Endothelial cell of umbilical vein (primary cell): ENCODE measurements at regions of chr6 and their contacts with region 1.

Region 1: GRCh38 chr6:112180095-112180820 is 74.1 kb downstream of the LAMA4 start:
- DNase-seq: peak; percentile 71
- H3K4me3 ChIP-seq: no peak overlapping the region
- H3K27ac ChIP-seq: no peak overlapping the region
- H3K4me1 ChIP-seq: peaks cover 11% of the 10 kb centered on the region
- H3K27me3 ChIP-seq: no peaks in the 10 kb centered on the region
- CTCF ChIP-seq: peak; percentile 28 to 46
- POLR2A ChIP-seq: no peak

Region 2: DNA sequence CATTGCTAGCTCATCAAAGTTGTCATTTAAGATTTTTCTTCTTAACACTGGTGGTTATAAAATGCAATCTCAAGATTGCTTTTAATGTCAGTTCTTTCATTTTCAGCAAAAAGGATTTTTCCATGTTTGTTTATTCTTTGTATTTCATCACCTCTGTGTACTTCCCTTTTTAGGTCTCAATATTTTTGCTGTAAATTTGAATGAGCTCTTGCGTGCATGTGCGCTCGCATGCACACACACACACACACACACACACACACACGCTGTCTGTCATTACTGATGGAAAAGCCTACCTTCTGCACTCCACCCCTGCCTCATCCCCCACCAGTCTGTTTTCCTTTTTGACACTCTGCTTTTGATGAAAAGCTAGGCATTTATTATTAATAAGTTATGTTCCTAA is 221.7 kb before region 1 on chr6:
- CTCF ChIA-PET with region 1: no interaction called
- POLR2A ChIA-PET with region 1: no interaction called
- dilution Hi-C with region 1: no loop called
- intact Hi-C with region 1: no loop called
- DNase-seq: no peak
- H3K4me3 ChIP-seq: no peak overlapping the region
- H3K27ac ChIP-seq: no peak overlapping the region
- H3K4me1 ChIP-seq: no peaks in the 10 kb centered on the region
- H3K27me3 ChIP-seq: peaks cover 12 to 14% of the 10 kb centered on the region in 2 experiments
- CTCF ChIP-seq: no peak
- POLR2A ChIP-seq: no peak

Region 3: DNA sequence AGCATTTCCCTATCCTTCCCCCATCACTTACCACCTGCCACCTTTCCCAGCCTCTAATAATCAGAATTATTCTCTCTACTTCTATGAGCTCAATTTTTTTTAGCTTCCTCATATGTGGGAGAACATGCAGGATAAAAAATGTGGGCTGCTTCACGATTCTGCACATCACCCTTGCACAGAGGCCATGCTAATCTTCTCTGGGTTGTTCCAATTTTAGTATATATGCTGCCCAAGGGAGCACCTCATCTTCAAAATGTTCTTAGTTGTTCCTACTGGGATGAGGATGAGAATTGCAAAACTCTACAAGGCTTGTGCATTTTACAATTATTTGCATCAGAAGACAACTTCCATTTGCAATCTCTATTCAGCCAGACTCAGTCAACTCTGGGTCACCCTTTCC is 16.0 kb after region 1 on chr6:
- CTCF ChIA-PET with region 1: interaction called, 15 read pairs
- POLR2A ChIA-PET with region 1: no interaction called
- dilution Hi-C with region 1: no loop called
- intact Hi-C with region 1: no loop called
- DNase-seq: no peak
- H3K4me3 ChIP-seq: no peak overlapping the region
- H3K27ac ChIP-seq: no peak overlapping the region
- H3K4me1 ChIP-seq: peaks cover 11% of the 10 kb centered on the region
- H3K27me3 ChIP-seq: no peaks in the 10 kb centered on the region
- CTCF ChIP-seq: no peak
- POLR2A ChIP-seq: no peak

Region 4: GRCh38 chr6:112216699-112217551 is 36.7 kb after region 1 on chr6:
- CTCF ChIA-PET with region 1: interaction called, 8 read pairs
- POLR2A ChIA-PET with region 1: no interaction called
- dilution Hi-C with region 1: no loop called
- intact Hi-C with region 1: loop called (anchors 2 kb)
- DNase-seq: peak; percentile 96
- H3K4me3 ChIP-seq: no peak overlapping the region
- H3K27ac ChIP-seq: peak overlapping the region; percentile 96
- H3K4me1 ChIP-seq: peaks cover 81% of the 10 kb centered on the region
- H3K27me3 ChIP-seq: no peaks in the 10 kb centered on the region
- CTCF ChIP-seq: no peak
- POLR2A ChIP-seq: peak; percentile 93

Region 5: GRCh38 chr6:112245511-112246203 is 65.4 kb after region 1 on chr6:
- CTCF ChIA-PET with region 1: interaction called, 49 read pairs
- POLR2A ChIA-PET with region 1: no interaction called
- dilution Hi-C with region 1: no loop called
- intact Hi-C with region 1: no loop called
- DNase-seq: peak; percentile 14
- H3K4me3 ChIP-seq: no peak overlapping the region
- H3K27ac ChIP-seq: peak overlapping the region; percentile 29
- H3K4me1 ChIP-seq: peaks cover 88% of the 10 kb centered on the region
- H3K27me3 ChIP-seq: no peaks in the 10 kb centered on the region
- CTCF ChIP-seq: no peak
- POLR2A ChIP-seq: no peak

Region 6: GRCh38 chr6:112269114-112269513 is 88.9 kb after region 1 on chr6:
- CTCF ChIA-PET with region 1: interaction called, 83 read pairs
- POLR2A ChIA-PET with region 1: no interaction called
- dilution Hi-C with region 1: no loop called
- intact Hi-C with region 1: no loop called
- DNase-seq: peak; percentile 81
- H3K4me3 ChIP-seq: no peak overlapping the region
- H3K27ac ChIP-seq: no peak overlapping the region
- H3K4me1 ChIP-seq: peaks cover 19% of the 10 kb centered on the region
- H3K27me3 ChIP-seq: peaks cover 0 to 2% of the 10 kb centered on the region in 2 experiments
- CTCF ChIP-seq: peak; percentile 41 to 48
- POLR2A ChIP-seq: no peak

Region 7: GRCh38 chr6:112296122-112296521 is 115.9 kb after region 1 on chr6:
- CTCF ChIA-PET with region 1: interaction called, 14 read pairs
- POLR2A ChIA-PET with region 1: no interaction called
- dilution Hi-C with region 1: no loop called
- intact Hi-C with region 1: no loop called
- DNase-seq: peak; percentile 62
- H3K4me3 ChIP-seq: no peak overlapping the region
- H3K27ac ChIP-seq: no peak overlapping the region
- H3K4me1 ChIP-seq: peaks cover 15% of the 10 kb centered on the region
- H3K27me3 ChIP-seq: no peaks in the 10 kb centered on the region
- CTCF ChIP-seq: peak; percentile 60 to 64
- POLR2A ChIP-seq: no peak

Region 8: DNA sequence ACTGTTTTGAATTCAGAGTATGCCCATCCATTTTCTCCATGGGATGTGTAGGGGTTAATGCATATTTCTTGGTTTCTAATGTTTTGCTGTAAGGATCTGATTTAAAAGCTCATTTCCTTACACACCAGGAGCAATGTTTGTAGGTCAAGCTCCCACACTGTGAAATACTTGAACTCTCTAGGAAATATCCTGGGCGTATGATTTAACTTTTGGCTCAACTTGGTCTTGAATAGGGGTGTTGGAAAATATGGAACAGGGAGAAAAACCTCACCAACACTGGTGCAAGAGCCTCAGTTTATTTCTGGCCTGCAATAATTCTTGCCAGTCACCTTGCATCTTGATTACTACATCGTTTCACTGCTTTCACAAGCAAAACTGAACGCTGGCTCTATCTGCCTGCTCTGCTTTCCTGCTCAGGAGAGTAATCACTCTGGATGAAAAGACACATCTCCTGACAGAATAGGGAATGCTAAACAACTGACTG is 141.7 kb after region 1 on chr6:
- CTCF ChIA-PET with region 1: interaction called, 12 read pairs
- POLR2A ChIA-PET with region 1: no interaction called
- dilution Hi-C with region 1: no loop called
- intact Hi-C with region 1: no loop called
- DNase-seq: peak; percentile 21
- H3K4me3 ChIP-seq: no peak overlapping the region
- H3K27ac ChIP-seq: no peak overlapping the region
- H3K4me1 ChIP-seq: peaks cover 16% of the 10 kb centered on the region
- H3K27me3 ChIP-seq: no peaks in the 10 kb centered on the region
- CTCF ChIP-seq: no peak
- POLR2A ChIP-seq: no peak